Dorsolateral prefrontal cortex (tissue), 120 donors: ENCODE measurements at regions of chr10 and their contacts with region 1.

Region 1: GRCh38 chr10:28241741-28242399 is 61.0 kb downstream of the MPP7 start:
- DNase-seq: peak in 1 of 10 donors; percentile 44
- H3K4me3 ChIP-seq: no peak overlapping the region
- H3K27ac ChIP-seq: no peak overlapping the region
- H3K27me3 ChIP-seq: peaks cover 0 to 7% (median 0%) of the 10 kb centered on the region in 45 donors
- CTCF ChIP-seq: peak; percentile 78 to 99 (median 88)

Region 2: DNA sequence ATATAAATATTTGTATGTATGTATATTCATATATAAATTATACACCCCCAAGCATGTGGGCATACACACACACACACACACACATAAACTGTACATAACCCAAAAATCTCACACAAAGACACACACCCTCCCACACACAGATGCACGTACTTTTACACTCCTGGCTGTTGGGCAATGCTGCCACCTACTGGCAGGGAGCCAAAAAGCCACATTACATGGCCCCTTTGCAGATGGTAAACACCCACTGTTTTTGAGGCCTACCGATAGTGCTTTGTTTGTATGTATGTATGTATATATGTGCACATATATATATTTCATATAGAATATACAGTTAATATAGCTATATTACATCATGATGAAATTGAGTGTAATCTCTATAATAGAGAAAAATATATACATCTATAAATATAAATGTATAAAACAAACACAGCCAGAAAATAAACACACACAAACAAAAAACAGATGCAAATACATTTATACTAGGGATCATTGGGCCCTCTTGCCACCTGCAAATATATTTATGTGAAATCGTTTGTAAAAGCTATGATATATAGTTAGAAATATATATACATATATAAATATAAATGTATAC is 881.2 kb before region 1 on chr10:
- intact Hi-C with region 1: loop called in 1 of 2 experiments (anchors 10 kb)
- DNase-seq: peak; percentile 48 to 88 (median 76)
- H3K4me3 ChIP-seq: no peak overlapping the region
- H3K27ac ChIP-seq: no peak overlapping the region
- H3K27me3 ChIP-seq: no peaks in the 10 kb centered on the region
- CTCF ChIP-seq: peak; percentile 43 to 78 (median 64)

Region 3: GRCh38 chr10:27446091-27446918 is 795.6 kb before region 1 on chr10:
- intact Hi-C with region 1: loop called in 1 of 2 experiments (anchors 10 kb)
- DNase-seq: no peak
- H3K4me3 ChIP-seq: peak overlapping the region in 4 of 59 donors; percentile 9 to 25 (median 14)
- H3K27ac ChIP-seq: no peak overlapping the region
- H3K27me3 ChIP-seq: no peaks in the 10 kb centered on the region
- CTCF ChIP-seq: peak in 54 of 56 donors; percentile 19 to 75 (median 54)

Region 4: GRCh38 chr10:27742195-27743011 is 499.5 kb before region 1 on chr10:
- intact Hi-C with region 1: loop called in 1 of 2 experiments (anchors 2 kb)
- DNase-seq: peak in 9 of 10 donors; percentile 33 to 79 (median 63)
- H3K4me3 ChIP-seq: peak overlapping the region; percentile 29 to 76 (median 60)
- H3K27ac ChIP-seq: peak overlapping the region in 51 of 59 donors; percentile 33 to 91 (median 72)
- H3K27me3 ChIP-seq: peaks cover 0 to 91% (median 60%) of the 10 kb centered on the region in 45 donors
- CTCF ChIP-seq: peak in 55 of 56 donors; percentile 29 to 82 (median 66)

Region 5: GRCh38 chr10:28367929-28368484 is 126.1 kb after region 1 on chr10:
- intact Hi-C with region 1: no loop called
- DNase-seq: no peak
- H3K4me3 ChIP-seq: no peak overlapping the region
- H3K27ac ChIP-seq: no peak overlapping the region
- H3K27me3 ChIP-seq: peaks cover 0 to 14% (median 0%) of the 10 kb centered on the region in 45 donors
- CTCF ChIP-seq: no peak